Activated CD4-positive, alpha-beta T cell treated with anti-CD3 and anti-CD28 coated beads for 36 hours (primary cell): ENCODE measurements at regions of chr20 and their contacts with region 1.

Region 1: DNA sequence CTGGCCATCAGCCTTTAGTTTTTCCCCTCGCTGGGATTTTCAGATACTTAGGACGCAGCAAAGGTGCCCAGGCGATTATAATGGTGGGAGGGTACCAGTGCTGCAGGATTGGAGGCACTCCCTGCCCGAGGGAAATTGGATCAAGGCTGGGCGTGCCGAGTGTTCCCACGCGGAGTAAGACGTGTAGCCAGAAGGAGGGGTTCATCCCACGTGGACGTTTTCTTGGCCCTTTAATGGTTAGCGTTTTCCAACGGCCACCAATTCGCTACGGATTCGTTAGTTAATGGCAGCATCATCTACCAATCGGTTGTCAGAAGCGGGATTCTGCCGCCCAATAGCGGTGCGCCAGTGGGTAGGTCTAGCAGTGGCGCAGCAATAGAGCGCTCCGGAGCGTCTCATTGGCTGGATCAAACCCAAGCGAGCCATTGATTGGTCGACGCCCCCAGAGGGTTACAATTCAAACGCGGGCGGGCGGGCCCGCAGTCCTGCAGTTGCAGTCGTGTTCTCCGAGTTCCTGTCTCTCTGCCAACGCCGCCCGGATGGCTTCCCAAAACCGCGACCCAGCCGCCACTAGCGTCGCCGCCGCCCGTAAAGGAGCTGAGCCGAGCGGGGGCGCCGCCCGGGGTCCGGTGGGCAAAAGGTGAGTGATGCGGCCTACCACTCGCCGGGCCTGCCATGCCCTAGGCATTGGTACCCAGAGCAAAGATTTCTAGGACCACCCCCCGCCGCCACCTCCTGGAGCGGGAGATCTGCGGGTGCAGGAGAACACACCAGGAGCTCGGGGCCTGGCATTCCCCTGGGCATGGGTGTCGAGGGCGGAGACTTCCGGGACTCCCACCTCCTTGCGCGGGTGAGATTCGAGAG is at the start of gene UBE2C:
- DNase-seq: peak; percentile 97
- ATAC-seq: peak; percentile 100
- H3K4me3 Mint-ChIP-seq: peak within 1 kb of the TSS; percentile 99
- H3K27ac Mint-ChIP-seq: peak within 1 kb of the TSS; percentile 88
- H3K4me1 Mint-ChIP-seq: peaks cover 21% of the 10 kb centered on the region
- H3K27me3 Mint-ChIP-seq: no peaks in the 10 kb centered on the region
- total RNA-seq, gene UBE2C: 175 to 230 TPM

Region 2: GRCh38 chr20:45611054-45611453 is 201.3 kb before region 1 on chr20:
- CTCF ChIA-PET with region 1: no interaction called
- POLR2A ChIA-PET with region 1: no interaction called
- intact Hi-C with region 1: loop called in 1 of 2 experiments (anchors 1 kb)
- DNase-seq: peak; percentile 79
- ATAC-seq: peak; percentile 93
- H3K4me3 Mint-ChIP-seq: no peak overlapping the region
- H3K27ac Mint-ChIP-seq: peak overlapping the region; percentile 47
- H3K4me1 Mint-ChIP-seq: peaks cover 23% of the 10 kb centered on the region
- H3K27me3 Mint-ChIP-seq: peaks cover 26% of the 10 kb centered on the region

Region 3: DNA sequence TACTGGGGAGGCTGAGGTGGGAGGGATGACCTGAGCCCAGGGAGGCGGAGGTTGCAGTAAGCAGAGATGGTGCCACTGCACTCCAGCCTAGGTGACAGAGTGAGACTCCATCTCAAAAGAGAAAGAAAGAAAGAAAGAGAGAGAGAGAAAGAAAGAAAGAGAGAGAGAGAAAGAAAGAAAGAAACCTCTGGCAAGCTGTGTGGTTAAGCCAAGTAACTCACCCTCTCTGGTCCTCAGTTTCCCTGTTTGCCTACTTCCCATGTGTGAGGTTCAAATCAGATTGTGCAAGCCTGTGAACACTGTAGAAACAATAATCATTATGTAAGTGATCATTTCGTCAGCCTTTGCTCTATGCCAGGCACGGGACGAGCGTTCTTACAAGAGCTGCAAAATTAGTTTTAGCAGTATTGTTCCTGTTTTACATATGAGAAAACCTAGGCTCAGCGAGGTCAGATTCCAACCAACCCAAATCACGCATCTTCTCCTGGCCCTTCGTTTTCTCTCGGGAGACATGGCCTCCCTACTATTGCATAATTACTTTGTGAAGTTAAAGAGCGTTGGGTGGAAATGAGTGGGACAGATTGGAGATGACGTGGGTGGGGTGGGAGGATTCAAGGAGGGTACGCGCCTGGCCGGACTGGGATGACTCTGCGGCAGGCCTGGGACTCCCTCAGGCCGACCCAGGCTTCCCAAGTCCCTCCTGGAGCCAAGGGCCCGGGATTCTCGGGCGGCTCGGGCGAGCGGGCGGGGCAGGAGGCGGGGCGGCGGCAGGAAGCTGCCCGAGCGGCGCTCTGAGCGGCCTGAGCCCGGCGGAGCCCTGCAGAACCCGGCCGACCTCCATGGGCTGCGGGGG is 20.9 kb after region 1 on chr20 and contains the start of gene SNX21:
- CTCF ChIA-PET with region 1: no interaction called
- POLR2A ChIA-PET with region 1: interaction called, 3 read pairs
- intact Hi-C with region 1: loop called in 1 of 2 experiments (anchors 1 kb)
- DNase-seq: peak; percentile 59
- ATAC-seq: peak; percentile 60
- H3K4me3 Mint-ChIP-seq: peak within 1 kb of the TSS; percentile 69
- H3K27ac Mint-ChIP-seq: peak within 1 kb of the TSS; percentile 31
- H3K4me1 Mint-ChIP-seq: peaks cover 9% of the 10 kb centered on the region
- H3K27me3 Mint-ChIP-seq: peaks cover 3% of the 10 kb centered on the region
- total RNA-seq, gene SNX21: 1.2 to 1.4 TPM

Region 4: DNA sequence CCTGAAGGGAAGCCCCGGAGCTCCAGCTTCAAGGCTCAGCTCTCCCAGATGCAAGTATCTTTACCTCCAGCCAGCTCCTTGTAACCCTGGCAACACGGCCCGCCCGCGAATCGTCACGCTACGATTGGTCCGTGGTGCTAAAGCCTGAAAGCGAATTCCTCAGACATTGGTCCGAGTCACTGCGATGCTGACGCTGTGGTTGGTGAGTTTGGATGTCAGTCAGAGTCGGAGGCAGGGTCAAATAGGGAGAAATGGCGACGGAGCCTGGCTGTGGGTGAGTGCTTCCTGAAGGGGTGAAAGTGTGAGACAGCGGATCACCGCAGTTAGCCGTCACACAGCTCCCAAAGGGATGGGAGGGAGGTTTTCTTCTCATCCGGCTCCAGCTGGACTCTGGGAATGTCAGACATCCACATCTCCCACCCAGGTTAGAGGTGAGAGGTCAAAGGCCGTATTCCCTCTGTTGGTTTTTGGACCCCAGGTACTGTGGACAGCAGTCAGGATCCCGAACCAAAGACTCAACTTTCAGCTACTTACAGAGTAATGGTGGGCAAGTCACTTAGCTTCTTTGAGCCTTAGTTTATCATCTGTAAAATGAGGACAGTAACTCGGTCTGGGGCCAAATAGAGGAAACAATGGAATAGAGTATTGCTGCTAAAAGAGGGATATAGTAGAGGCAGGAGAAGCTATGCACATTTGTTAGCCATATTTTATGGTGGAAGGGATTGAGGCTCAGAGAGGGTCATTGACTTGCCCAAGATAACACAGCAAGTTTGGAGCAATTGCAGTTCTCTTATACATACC is 68.8 kb after region 1 on chr20 and contains the start of gene ZSWIM1:
- CTCF ChIA-PET with region 1: no interaction called
- POLR2A ChIA-PET with region 1: no interaction called
- intact Hi-C with region 1: loop called in 1 of 2 experiments (anchors 1 kb)
- DNase-seq: peak; percentile 99
- ATAC-seq: peak; percentile 98
- H3K4me3 Mint-ChIP-seq: peak within 1 kb of the TSS; percentile 94
- H3K27ac Mint-ChIP-seq: peak within 1 kb of the TSS; percentile 95
- H3K4me1 Mint-ChIP-seq: peaks cover 42% of the 10 kb centered on the region
- H3K27me3 Mint-ChIP-seq: no peaks in the 10 kb centered on the region
- total RNA-seq, gene ZSWIM1: 9.4 to 10.7 TPM

Region 5: DNA sequence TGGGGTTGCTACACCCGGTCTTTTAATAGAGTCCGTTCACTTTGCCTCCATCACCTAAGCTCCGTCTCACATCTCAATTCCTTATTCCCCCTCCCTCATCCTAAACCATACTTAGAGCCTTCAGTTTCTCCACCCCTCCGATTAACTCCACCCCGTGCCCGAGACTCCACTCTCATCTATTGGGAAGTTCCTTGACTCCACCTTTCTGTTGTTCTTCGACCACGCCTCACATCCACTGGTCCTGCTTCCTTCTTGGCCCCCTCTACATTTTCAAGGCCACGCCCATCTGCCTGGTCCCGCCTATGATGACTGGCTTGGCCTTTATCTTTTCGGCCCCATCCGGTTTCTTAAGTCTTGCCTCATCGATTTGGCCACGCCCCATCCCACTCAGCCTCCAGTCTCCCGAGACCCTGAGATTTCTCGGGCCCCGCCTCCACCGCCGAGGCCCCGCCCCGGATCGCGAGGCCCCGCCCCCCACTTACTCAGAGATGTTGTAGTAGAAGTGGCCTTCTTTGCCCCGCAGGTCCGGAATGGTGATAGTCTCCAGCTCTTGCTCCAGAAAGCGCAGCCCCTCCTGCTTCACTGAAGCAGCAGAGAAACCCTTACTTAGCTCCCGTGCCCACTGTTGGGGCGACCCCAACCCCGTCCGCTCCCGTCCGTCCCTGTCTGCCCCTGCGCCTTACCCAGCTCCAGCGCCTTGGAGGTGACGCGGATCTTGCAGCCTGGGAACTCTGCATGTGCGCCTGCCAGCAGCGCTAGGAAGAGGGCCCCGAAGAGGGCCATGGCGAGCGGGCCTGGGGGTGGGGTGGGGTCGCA is 98.5 kb after region 1 on chr20:
- CTCF ChIA-PET with region 1: no interaction called
- POLR2A ChIA-PET with region 1: no interaction called
- intact Hi-C with region 1: loop called (anchors 1 kb)
- DNase-seq: peak; percentile 98
- ATAC-seq: peak; percentile 92
- H3K4me3 Mint-ChIP-seq: peak overlapping the region; percentile 68
- H3K27ac Mint-ChIP-seq: peak overlapping the region; percentile 80
- H3K4me1 Mint-ChIP-seq: peaks cover 16% of the 10 kb centered on the region
- H3K27me3 Mint-ChIP-seq: peaks cover 12% of the 10 kb centered on the region

Region 6: DNA sequence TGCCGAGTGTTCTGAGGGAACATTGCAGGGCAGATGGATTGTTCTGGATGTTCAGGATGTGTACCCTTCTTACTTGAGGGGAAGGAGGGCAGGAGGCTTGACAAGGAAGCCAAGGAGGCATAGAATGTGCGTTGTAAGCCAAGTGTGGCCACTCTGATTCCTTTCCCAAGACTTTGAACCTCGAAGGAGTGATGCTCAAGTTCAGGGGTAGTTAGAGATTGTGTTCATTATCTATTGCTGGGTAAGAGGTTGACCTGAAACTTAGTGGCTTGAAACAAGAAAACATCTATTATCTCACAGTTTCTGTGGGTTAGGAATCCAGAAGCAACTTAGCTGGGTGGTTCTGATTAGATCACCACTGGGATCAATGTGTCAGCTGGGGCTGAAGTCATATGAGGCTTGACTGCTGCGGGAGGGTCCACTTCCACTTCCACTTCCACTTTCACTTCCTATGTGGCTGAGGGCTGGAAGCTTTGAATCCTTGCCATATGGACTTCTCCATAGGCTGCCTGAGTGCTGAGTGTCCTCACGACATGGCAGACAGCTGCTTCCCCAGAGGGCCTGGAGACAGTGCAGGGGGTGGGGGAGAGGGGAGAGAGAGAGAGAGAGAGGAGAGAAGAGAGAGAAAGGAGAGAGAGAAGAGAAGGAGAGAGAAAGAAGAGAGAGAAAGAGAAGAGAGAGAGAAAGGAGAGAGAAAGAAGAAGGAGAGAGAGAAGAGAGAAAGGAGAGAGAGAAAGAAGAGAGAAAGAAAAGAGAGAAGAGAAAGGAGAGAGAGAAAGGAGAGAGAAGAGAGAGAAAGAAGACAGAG is 298.8 kb after region 1 on chr20:
- CTCF ChIA-PET with region 1: no interaction called
- POLR2A ChIA-PET with region 1: no interaction called
- intact Hi-C with region 1: no loop called
- DNase-seq: peak; percentile 51
- ATAC-seq: peak; percentile 60
- H3K4me3 Mint-ChIP-seq: no peak overlapping the region
- H3K27ac Mint-ChIP-seq: no peak overlapping the region
- H3K4me1 Mint-ChIP-seq: peaks cover 8% of the 10 kb centered on the region
- H3K27me3 Mint-ChIP-seq: peaks cover 41% of the 10 kb centered on the region